Endothelial cell of umbilical vein (primary cell): ENCODE measurements at regions of chr17 and their contacts with region 1.

Region 1: DNA sequence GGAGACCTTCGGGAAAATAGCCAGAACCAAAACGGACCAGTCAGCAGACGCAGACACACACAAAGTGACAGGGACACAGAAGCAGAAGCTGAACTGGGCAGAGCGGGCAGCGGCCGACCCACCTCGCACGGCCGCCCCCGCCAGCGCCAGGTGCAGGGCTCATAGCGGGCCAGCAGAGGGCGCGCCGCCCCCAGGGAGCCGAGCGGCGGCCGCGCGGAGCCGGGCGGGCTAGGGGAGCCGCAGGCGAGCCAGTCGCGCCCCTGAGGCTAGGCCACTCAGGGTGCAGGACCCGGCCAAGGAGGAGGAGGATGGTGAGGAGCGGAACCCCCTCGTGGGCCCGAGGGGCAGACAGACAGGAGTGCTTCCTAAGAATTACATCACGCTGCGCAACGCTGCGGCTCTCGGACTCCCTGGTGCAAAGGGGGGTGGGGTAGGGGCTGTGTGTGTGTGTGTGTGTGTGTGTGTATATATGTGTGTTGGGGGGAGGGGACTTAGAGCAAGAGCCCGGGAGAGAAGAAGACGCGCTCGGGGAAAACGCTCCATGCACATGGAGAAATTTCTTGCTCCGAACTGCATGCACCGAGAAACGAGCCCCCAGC is 913 bp upstream of the NOG start:
- DNase-seq: peak; percentile 45
- H3K4me3 ChIP-seq: peak overlapping the region; percentile 46 to 66 (median 48)
- H3K27ac ChIP-seq: no peak overlapping the region
- H3K4me1 ChIP-seq: peaks cover 21% of the 10 kb centered on the region
- H3K27me3 ChIP-seq: peaks cover 41 to 54% of the 10 kb centered on the region in 2 experiments
- CTCF ChIP-seq: peak; percentile 77 to 88
- POLR2A ChIP-seq: no peak

Region 2: DNA sequence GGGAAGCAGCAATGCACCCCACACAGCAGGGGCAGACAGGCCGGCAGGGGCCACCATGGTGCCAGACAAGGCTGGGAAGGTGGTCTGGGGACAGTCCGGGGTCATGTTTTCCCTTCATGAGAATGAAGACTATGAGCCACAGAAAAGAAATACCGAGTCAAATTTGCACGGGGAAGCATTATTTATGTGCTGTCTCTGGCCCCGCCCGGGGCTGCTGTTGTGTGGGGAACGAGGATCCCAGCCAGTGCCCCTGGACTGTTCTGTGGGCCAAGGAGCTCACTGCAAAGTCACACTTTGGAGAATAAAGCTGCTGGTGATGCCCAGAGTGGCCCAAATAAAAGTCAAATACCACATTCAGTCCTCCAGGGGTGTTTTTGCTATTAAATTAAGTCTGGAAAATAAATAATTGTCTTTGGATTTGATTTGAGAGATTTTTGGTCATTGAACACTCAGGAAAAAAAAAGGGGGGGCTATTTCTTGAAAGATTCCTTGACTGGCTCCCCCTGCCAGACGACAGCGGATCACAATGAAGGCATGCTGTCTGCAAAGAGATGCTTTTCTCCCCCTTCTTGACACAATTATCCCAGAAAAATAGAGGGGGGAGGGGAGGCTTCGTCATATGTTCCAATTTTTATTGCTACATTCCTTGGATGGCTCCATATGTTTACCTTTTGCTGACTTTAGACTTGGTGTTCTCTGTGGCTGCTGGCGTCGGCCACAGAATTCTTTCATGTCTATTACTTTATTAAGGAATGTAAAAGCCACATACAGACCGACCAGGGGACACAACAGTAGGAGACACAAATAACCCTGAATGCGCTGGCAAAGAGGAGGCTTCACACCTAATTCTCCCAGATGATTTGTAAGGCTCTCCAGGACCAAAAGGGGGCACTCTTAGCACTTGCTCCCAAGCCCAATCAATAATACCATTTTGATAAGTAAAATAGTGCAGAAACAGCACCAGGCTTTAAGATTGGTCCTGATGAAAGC is 466.5 kb before region 1 on chr17:
- CTCF ChIA-PET with region 1: no interaction called
- POLR2A ChIA-PET with region 1: no interaction called
- dilution Hi-C with region 1: no loop called
- intact Hi-C with region 1: loop called (anchors 5 kb)
- DNase-seq: peak; percentile 56
- H3K4me3 ChIP-seq: no peak overlapping the region
- H3K27ac ChIP-seq: no peak overlapping the region
- H3K4me1 ChIP-seq: no peaks in the 10 kb centered on the region
- H3K27me3 ChIP-seq: peaks cover 8 to 10% of the 10 kb centered on the region in 2 experiments
- CTCF ChIP-seq: peak; percentile 62 to 65
- POLR2A ChIP-seq: no peak

Region 3: GRCh38 chr17:56581635-56582627 is 10.7 kb before region 1 on chr17:
- CTCF ChIA-PET with region 1: interaction called, 17 read pairs
- POLR2A ChIA-PET with region 1: no interaction called
- dilution Hi-C with region 1: no loop called
- intact Hi-C with region 1: no loop called
- DNase-seq: no peak
- H3K4me3 ChIP-seq: no peak overlapping the region
- H3K27ac ChIP-seq: no peak overlapping the region
- H3K4me1 ChIP-seq: no peaks in the 10 kb centered on the region
- H3K27me3 ChIP-seq: peaks cover 6 to 10% of the 10 kb centered on the region in 2 experiments
- CTCF ChIP-seq: no peak
- POLR2A ChIP-seq: no peak

Region 4: DNA sequence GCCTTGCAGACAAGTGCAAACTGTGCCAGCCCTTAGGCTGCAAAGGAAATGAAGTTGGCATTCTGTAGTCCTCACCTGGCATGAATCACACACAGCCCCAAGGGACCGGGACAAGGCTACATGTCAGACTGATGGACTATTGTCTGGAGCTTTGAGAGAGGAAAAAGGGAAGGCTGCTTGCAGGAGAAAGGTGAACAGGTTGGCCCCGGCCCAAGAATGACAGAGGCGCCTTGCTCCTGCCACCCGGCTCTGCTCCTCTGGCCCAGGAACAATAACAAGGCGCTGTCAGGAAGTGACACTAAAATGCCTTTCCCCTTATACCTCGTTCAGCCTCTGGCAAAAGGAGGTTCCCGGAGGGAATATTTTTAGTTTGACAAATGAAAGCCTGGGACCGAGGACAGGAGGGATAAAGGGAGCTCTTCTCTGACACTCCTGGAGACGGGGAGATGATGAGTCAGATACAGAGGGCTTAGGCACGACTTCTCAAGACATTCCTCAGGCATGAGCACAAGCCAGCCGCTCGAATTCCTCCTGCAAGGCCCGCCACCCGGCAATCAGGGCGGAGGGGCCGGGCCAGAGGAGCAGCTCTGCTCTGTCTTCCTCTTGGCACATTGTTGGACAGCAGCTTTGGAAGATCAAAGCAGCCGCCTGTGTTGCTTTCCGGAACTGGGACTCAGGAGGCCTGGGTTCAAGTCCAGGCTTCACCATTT is 106.8 kb after region 1 on chr17:
- CTCF ChIA-PET with region 1: interaction called, 6 read pairs
- POLR2A ChIA-PET with region 1: no interaction called
- dilution Hi-C with region 1: loop called (anchors 25 kb)
- intact Hi-C with region 1: loop called (anchors 1 kb)
- DNase-seq: peak; percentile 56
- H3K4me3 ChIP-seq: no peak overlapping the region
- H3K27ac ChIP-seq: peak overlapping the region; percentile 88
- H3K4me1 ChIP-seq: peaks cover 18% of the 10 kb centered on the region
- H3K27me3 ChIP-seq: no peaks in the 10 kb centered on the region
- CTCF ChIP-seq: no peak
- POLR2A ChIP-seq: peak; percentile 42

Region 5: DNA sequence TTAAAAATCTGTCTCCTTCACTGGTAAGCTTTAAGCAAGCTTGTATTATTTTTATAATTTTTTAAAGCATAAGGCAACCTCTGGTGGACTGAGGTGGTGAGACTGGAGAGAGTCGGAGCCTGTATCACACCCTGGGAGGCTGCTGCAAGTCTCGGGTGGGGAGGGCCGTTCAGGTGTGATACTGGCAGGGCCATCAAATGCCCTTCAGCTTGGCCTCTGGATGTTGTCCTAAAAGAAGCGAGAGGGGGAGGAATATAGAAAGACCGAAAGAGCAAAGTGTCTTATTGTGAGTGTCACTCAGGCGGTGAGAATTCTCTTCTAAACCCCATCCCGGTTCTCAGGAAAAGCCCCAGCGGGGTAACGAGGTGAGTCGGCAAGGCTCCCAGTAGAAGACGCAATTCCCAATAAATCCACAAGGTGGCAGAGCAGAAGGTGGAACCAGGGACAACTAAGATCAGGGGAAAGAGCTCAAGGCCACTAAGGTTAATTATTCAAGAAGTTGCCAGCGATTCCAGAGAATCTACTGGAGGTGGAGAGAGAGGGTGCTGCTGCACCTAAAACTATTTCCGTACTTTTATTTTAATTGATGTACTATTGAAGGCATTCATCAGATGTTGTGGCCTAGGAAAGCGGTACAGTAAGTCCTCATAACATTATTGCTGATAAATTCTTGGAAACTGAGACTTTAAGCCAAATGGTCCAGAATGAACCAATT is 227.0 kb after region 1 on chr17:
- CTCF ChIA-PET with region 1: interaction called, 8 read pairs
- POLR2A ChIA-PET with region 1: no interaction called
- dilution Hi-C with region 1: no loop called
- intact Hi-C with region 1: loop called (anchors 5 kb)
- DNase-seq: peak; percentile 79
- H3K4me3 ChIP-seq: no peak overlapping the region
- H3K27ac ChIP-seq: no peak overlapping the region
- H3K4me1 ChIP-seq: peaks cover 24% of the 10 kb centered on the region
- H3K27me3 ChIP-seq: no peaks in the 10 kb centered on the region
- CTCF ChIP-seq: peak; percentile 67 to 80
- POLR2A ChIP-seq: no peak

Region 6: GRCh38 chr17:57662644-57663308 is 1070.2 kb after region 1 on chr17:
- CTCF ChIA-PET with region 1: no interaction called
- POLR2A ChIA-PET with region 1: no interaction called
- dilution Hi-C with region 1: no loop called
- intact Hi-C with region 1: loop called (anchors 2 kb)
- DNase-seq: peak; percentile 98
- H3K4me3 ChIP-seq: peak overlapping the region in 2 of 3 experiments; percentile 5 to 32
- H3K27ac ChIP-seq: peak overlapping the region; percentile 87
- H3K4me1 ChIP-seq: peaks cover 13% of the 10 kb centered on the region
- H3K27me3 ChIP-seq: no peaks in the 10 kb centered on the region
- CTCF ChIP-seq: no peak
- POLR2A ChIP-seq: no peak